ENCODE measurements at regions of chr10 and their contacts with region 1.

Region 1: DNA sequence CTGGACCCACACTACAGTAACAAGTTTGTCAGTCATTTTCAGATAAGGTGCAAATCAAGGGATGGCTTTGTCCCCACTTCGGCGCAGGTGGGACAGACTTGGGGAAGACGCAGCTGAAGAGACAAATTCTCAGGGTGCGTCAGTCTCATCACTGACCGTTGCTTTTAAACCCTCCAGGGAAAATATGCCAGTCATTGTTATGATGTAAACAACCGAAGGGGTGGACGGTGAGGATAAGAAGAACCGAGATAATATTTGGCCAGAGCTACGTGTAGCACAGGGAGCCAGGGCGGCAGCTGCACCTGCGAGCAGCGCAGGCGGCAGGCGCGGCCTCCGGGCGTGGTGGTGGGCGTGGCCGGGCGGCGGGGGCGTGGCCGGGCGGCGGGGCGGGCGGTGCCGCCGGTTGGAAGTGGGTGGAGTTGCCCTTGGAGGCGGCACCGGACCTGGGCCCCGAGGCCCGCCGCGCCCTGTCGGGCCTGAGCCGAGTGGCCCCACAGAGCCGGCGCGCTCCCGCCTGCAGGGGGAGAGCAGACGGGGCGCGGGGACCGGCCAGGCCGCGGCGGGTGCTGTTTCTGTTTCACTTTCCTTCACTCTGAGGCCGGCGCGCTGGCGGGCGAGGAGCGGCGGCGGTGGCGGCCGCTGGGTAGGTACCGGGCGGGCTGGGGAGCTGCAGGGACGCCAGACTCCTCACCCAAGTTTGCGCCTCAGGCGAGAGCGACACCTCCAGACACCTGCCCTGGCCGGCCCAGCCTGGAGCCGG is at the start of gene PCGF5:
- DNase-seq: peak; percentile 96 to 97 (median 96)
- ATAC-seq: peak; percentile 97 to 100 (median 98)
- H3K4me3 ChIP-seq: peak within 1 kb of the TSS; percentile 69 to 94 (median 85)
- H3K27ac ChIP-seq: peak within 1 kb of the TSS; percentile 89 to 94 (median 94)
- H3K4me1 ChIP-seq: peaks cover 0 to 17% (median 8%) of the 10 kb centered on the region in 4 donors
- H3K27me3 ChIP-seq: no peaks in the 10 kb centered on the region
- CTCF ChIP-seq: peak; percentile 24 to 56 (median 34)
- POLR2A ChIP-seq: peak; percentile 90
- total RNA-seq, gene PCGF5: 25.6 to 30.9 (median 30.0) TPM

Region 2: DNA sequence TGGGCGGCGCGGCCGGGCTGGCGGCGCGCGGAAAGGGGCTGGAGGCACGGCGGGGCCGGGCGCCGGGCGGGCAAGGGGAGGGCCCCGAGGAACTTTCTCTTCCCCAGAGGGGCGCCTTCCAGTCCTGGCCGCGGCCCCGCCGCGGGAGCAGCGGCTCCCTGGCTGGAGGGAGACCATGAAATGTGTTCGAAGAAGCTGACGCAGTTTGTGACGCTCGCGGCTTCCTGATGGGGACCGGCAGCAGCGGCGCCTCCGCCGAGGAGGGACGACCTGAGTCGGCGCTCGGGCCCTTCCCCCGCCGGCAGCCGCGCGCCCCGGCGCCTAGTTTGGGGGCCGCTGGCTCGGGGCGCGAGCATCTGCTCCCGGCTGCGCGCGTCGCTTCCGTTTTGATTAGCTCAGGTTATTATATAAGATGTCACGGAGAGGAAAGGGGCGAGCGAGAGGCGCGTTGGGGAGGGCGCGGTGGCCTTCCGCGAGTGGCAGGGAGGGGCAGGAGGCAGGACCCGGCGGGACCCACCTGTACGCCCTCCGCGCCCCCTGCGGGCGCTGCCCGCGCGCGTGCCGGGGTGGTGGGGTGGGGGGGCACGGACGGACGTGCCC is 57.0 kb before region 1 on chr10:
- intact Hi-C with region 1: loop called in 1 of 2 experiments (anchors 10 kb)
- DNase-seq: peak; percentile 74 to 83 (median 74)
- ATAC-seq: peak; percentile 54 to 73 (median 70)
- H3K4me3 ChIP-seq: peak overlapping the region; percentile 91 to 96 (median 96)
- H3K27ac ChIP-seq: peak overlapping the region; percentile 94 to 97 (median 94)
- H3K4me1 ChIP-seq: peaks cover 0 to 6% (median 0%) of the 10 kb centered on the region in 4 donors
- H3K27me3 ChIP-seq: no peaks in the 10 kb centered on the region
- CTCF ChIP-seq: peak in 1 of 4 donors; percentile 9
- POLR2A ChIP-seq: peak; percentile 64

Region 3: GRCh38 chr10:91477312-91477635 is 256.9 kb after region 1 on chr10:
- intact Hi-C with region 1: no loop called
- DNase-seq: no peak
- ATAC-seq: no peak
- H3K4me3 ChIP-seq: no peak overlapping the region
- H3K27ac ChIP-seq: no peak overlapping the region
- H3K4me1 ChIP-seq: no peaks in the 10 kb centered on the region
- H3K27me3 ChIP-seq: no peaks in the 10 kb centered on the region
- CTCF ChIP-seq: no peak
- POLR2A ChIP-seq: no peak